Calu3 (cell line): ENCODE measurements at regions of chr1 and their contacts with region 1.

Region 1: GRCh38 chr1:59556802-59557548 is 257.8 kb upstream of the HOOK1 start:
- DNase-seq: peak; percentile 81
- H3K4me3 Mint-ChIP-seq: peak overlapping the region; percentile 24
- H3K27ac Mint-ChIP-seq: peak overlapping the region; percentile 82
- H3K4me1 Mint-ChIP-seq: peaks cover 61% of the 10 kb centered on the region
- H3K27me3 Mint-ChIP-seq: no peaks in the 10 kb centered on the region
- CTCF ChIP-seq: no peak

Region 2: GRCh38 chr1:59500950-59501742 is 55.8 kb before region 1 on chr1:
- CTCF ChIA-PET with region 1: interaction called, 6 read pairs
- intact Hi-C with region 1: loop called (anchors 2 kb)
- DNase-seq: no peak
- H3K4me3 Mint-ChIP-seq: no peak overlapping the region
- H3K27ac Mint-ChIP-seq: peak overlapping the region; percentile 84
- H3K4me1 Mint-ChIP-seq: peaks cover 43% of the 10 kb centered on the region
- H3K27me3 Mint-ChIP-seq: no peaks in the 10 kb centered on the region
- CTCF ChIP-seq: no peak

Region 3: DNA sequence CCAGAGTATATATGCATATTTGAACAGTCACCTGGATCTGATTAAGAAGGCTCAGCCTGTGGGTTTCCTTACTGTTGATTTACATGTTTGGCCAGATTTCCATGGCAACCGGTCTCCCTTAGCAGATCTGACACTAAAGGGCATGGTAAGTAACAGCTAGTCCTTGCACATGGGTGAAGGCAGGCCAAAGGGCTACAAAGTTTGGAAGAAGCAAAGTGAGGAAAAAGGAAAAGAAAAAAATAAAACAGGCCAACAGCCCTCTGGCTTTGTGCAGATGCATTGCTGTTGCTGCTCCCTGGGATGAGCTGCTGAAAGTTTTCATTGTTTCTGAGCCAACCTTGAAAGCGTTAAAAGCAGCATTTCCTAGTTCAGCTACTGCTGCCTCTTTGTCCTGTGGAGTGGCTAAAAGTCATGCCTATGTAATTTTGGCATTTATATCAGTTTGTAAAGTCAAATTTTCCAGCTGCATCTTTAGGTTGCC is 81.3 kb after region 1 on chr1:
- CTCF ChIA-PET with region 1: no interaction called
- intact Hi-C with region 1: loop called (anchors 5 kb)
- DNase-seq: peak; percentile 36
- H3K4me3 Mint-ChIP-seq: no peak overlapping the region
- H3K27ac Mint-ChIP-seq: peak overlapping the region; percentile 10
- H3K4me1 Mint-ChIP-seq: peaks cover 27% of the 10 kb centered on the region
- H3K27me3 Mint-ChIP-seq: no peaks in the 10 kb centered on the region
- CTCF ChIP-seq: no peak